ENCODE measurements at regions of chr6 and their contacts with region 1.

Region 1: GRCh38 chr6:42572523-42572922 is 8.7 kb downstream of the UBR2 start:
- DNase-seq: peak in 5 of 9 donors; percentile 14 to 45 (median 36)
- ATAC-seq: peak; percentile 79
- H3K4me3 ChIP-seq: no peak overlapping the region
- H3K4me3 Mint-ChIP-seq: peak overlapping the region in 8 of 10 donors; percentile 38 to 78 (median 64)
- H3K27ac ChIP-seq: no peak overlapping the region
- H3K27ac Mint-ChIP-seq: peak overlapping the region; percentile 1 to 88 (median 78)
- H3K4me1 ChIP-seq: peaks cover 20 to 26% of the 10 kb centered on the region in 2 donors
- H3K4me1 Mint-ChIP-seq: peaks cover 27 to 77% (median 54%) of the 10 kb centered on the region in 7 donors
- H3K27me3 ChIP-seq: peaks cover 0 to 3% of the 10 kb centered on the region in 2 donors
- H3K27me3 Mint-ChIP-seq: no peaks in the 10 kb centered on the region

Region 2: GRCh38 chr6:42610416-42610815 is 37.9 kb after region 1 on chr6:
- CTCF ChIA-PET with region 1: no interaction called
- POLR2A ChIA-PET with region 1: no interaction called
- intact Hi-C with region 1: loop called in 1 of 2 experiments (anchors 5 kb)
- DNase-seq: no peak
- ATAC-seq: no peak
- H3K4me3 ChIP-seq: no peak overlapping the region
- H3K4me3 Mint-ChIP-seq: no peak overlapping the region
- H3K27ac ChIP-seq: no peak overlapping the region
- H3K27ac Mint-ChIP-seq: peak overlapping the region in 1 of 9 donors; percentile 19
- H3K4me1 ChIP-seq: no peaks in the 10 kb centered on the region
- H3K4me1 Mint-ChIP-seq: peaks cover 0 to 14% (median 1%) of the 10 kb centered on the region in 7 donors
- H3K27me3 ChIP-seq: no peaks in the 10 kb centered on the region
- H3K27me3 Mint-ChIP-seq: no peaks in the 10 kb centered on the region

Region 3: GRCh38 chr6:42777126-42777822 is 204.8 kb after region 1 on chr6:
- CTCF ChIA-PET with region 1: no interaction called
- POLR2A ChIA-PET with region 1: no interaction called
- intact Hi-C with region 1: loop called in 1 of 2 experiments (anchors 5 kb)
- DNase-seq: no peak
- ATAC-seq: no peak
- H3K4me3 ChIP-seq: no peak overlapping the region
- H3K4me3 Mint-ChIP-seq: peak overlapping the region in 7 of 10 donors; percentile 6 to 61 (median 39)
- H3K27ac ChIP-seq: peak overlapping the region; percentile 37
- H3K27ac Mint-ChIP-seq: peak overlapping the region in 8 of 9 donors; percentile 60 to 100 (median 82)
- H3K4me1 ChIP-seq: peaks cover 66 to 68% of the 10 kb centered on the region in 2 donors
- H3K4me1 Mint-ChIP-seq: peaks cover 38 to 80% (median 70%) of the 10 kb centered on the region in 7 donors
- H3K27me3 ChIP-seq: no peaks in the 10 kb centered on the region
- H3K27me3 Mint-ChIP-seq: no peaks in the 10 kb centered on the region

Measured in naive thymus-derived CD4-positive, alpha-beta T cell (primary cell).